Activated T-helper 2 cell treated with anti-CD3 and anti-CD28 coated beads, Interferon-gamma antibody, Interleukin-2, Interleukin-4, amounts not matched to agents 10 μg/mL and 5 μg/mL and 100 μg/mL, durations not matched to agents 14 hours and 24 hours and 36 hours (primary cell): ENCODE measurements at regions of chr10 and their contacts with region 1.

Region 1: DNA sequence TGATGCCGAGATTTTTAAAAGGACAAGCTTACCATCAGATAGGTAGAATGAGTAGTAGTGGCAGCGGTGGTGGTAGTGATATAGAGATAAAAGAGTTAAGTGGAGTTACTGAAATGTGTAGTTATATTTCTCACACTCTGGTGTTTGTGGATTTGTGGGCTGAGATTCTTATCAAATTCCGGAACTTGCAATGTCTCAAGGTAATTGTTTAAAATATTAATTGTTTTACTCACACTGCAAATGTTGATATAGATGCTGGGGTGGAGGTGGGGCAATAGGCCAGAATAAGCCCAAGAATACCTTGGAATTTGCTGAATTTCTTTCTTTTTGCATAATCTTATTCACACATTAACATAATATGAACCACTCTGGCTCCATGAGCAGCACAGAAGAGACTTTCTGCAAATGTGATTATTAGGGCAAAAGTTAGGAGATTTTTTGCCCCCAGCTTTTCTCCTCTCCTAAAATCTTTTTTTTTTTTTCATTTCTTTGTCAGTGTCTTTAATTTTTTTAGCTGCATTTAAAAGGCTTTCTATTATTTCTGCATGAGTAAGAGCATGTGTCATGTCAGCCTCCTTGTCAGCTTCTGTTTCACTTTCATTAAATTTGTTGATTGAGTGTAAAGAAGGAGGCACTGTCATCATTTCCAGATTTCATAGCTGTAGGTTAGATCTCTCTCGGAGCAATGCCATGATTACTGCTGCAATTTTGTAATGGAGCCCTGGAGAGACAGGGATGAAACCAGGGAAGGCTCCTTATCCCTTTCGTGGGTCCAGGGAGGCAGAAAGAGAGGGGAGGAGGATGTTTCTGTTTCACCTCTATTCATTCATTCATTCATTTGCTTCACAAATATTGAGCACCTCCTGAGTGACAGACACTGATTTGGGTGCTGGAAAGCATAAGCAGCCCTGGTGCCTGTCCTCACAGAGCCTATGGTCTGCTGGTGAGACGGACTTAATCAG is 13.1 kb upstream of the SGMS1 start:
- DNase-seq: peak; percentile 35
- H3K4me3 Mint-ChIP-seq: peak overlapping the region; percentile 45
- H3K27ac Mint-ChIP-seq: peak overlapping the region; percentile 35
- H3K4me1 Mint-ChIP-seq: peaks cover 27% of the 10 kb centered on the region
- H3K27me3 Mint-ChIP-seq: peaks cover 72% of the 10 kb centered on the region

Region 2: GRCh38 chr10:50260791-50261281 is 376.1 kb before region 1 on chr10:
- intact Hi-C with region 1: loop called (anchors 1 kb)
- DNase-seq: peak; percentile 22
- H3K4me3 Mint-ChIP-seq: no peak overlapping the region
- H3K27ac Mint-ChIP-seq: no peak overlapping the region
- H3K4me1 Mint-ChIP-seq: peaks cover 29% of the 10 kb centered on the region
- H3K27me3 Mint-ChIP-seq: peaks cover 60% of the 10 kb centered on the region

Region 3: DNA sequence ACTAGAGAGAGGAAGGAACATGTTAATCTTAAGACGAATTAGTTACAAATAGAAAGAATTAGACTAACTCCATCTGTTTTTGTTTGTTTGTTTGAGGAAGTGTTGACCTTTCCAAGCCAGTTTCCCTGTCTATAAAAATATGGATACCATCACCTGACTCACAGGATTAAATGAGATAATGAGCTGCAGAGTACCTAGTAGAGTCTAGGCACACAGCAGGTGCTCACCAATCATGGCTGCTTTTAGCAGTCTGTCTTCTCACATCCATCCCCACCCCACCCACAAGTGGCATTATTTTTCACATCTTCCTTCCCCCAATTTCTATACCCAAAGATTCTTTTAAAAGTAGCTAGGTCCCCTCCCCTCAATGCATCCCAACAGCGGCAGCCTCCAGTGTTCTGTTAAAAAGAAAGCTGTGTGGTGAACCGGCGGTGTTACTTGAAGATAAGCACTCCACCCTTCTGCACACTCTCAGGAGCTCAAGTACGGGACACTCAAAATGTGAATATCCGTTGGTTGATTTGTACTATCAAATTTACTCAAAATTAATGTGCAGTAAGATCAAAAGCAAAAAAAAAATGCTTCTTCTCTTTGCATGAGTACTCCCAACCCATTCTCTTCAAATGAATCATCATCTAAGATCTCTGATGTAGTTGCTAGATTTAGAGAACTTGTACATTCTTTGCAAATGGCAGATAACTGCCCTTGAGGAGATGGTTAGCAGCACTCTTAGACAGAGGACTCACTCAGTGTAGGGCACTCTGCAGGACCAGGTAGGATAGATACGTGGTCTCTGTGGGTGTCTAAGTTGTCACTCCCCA is 240.2 kb before region 1 on chr10:
- intact Hi-C with region 1: loop called (anchors 1 kb)
- DNase-seq: peak; percentile 44
- H3K4me3 Mint-ChIP-seq: peak overlapping the region; percentile 68
- H3K27ac Mint-ChIP-seq: peak overlapping the region; percentile 92
- H3K4me1 Mint-ChIP-seq: peaks cover 59% of the 10 kb centered on the region
- H3K27me3 Mint-ChIP-seq: no peaks in the 10 kb centered on the region

Region 4: DNA sequence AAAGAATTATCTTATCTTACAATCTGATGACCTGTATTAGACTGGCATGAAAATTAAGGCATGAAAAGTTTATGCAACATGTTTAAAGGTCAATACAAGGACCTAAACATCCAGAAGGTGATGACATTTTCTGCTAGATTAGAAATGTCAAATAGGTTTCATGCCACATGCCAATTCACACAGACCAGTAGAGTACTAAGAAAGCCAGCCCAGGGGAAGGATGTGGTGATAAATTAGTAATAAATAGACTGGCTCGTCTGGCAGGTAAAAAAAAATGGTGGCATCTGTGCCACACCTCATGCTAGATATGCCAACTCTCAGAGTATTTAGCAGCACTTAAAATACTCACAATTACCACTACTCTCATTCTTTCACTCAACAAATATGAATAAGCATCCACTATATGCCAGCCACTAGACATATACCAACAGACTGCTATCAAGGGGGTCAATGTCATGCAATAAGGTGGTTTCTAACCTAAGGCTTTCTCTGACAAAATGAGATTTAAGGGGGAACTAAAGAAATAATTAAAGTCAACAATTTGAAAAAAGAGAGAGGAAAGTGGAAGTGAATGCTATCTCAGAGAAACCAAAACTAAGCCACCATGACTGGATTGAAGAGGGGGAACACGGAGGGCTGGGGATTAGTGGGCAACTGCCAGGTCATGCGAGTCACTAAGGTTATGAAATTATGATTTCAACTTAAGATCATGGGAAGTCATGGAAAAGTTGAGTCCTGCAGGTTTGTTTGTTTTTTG is 96.7 kb before region 1 on chr10:
- intact Hi-C with region 1: loop called (anchors 1 kb)
- DNase-seq: no peak
- H3K4me3 Mint-ChIP-seq: peak overlapping the region; percentile 9
- H3K27ac Mint-ChIP-seq: peak overlapping the region; percentile 83
- H3K4me1 Mint-ChIP-seq: peaks cover 72% of the 10 kb centered on the region
- H3K27me3 Mint-ChIP-seq: no peaks in the 10 kb centered on the region

Region 5: DNA sequence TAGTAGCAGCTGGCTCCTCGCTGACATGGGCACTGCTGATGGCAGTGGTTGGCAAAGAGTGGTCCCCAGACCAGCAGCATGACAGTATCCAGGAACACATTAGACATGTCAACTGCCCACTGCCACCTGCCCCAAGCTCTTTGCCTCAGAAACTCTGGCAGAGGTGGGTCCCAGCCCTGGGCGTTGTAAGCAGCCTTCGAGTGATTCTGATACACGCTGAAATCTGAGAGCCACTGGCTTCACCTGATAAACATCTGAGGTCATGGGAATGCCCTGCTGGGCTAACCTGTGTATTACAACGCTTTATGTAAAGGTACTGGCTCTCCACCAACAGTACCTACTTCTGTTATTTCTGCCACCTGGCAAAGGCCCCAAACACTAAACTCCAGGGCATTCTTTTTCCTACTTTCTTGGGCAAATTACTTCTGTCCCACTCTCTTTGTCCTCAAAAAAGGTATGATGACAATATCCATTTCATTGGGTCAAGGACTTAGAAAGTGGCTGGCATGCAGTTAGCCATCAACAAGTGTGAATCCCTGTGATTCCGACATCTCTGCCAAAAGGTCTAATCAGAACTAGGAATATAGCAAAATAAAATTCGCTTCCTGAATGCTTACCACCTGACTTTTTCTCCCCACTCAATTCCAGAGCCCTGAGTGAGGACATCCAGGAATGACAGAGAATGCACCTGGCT is 22.3 kb before region 1 on chr10:
- intact Hi-C with region 1: no loop called
- DNase-seq: no peak
- H3K4me3 Mint-ChIP-seq: no peak overlapping the region
- H3K27ac Mint-ChIP-seq: no peak overlapping the region
- H3K4me1 Mint-ChIP-seq: peaks cover 13% of the 10 kb centered on the region
- H3K27me3 Mint-ChIP-seq: peaks cover 5% of the 10 kb centered on the region